Heart right ventricle (tissue), 16 donors: ENCODE measurements at regions of chrX and their contacts with region 1.

Region 1: GRCh38 chrX:130079824-130080406 is 30.4 kb downstream of the ELF4 start:
- DNase-seq: peak; percentile 18 to 58
- ATAC-seq: peak in 7 of 8 donors; percentile 21 to 65 (median 58)
- H3K4me3 ChIP-seq: no peak overlapping the region
- H3K27ac ChIP-seq: no peak overlapping the region
- H3K4me1 ChIP-seq: peaks cover 0 to 37% (median 21%) of the 10 kb centered on the region in 9 donors
- H3K27me3 ChIP-seq: peaks cover 0 to 6% (median 0%) of the 10 kb centered on the region in 7 donors
- CTCF ChIP-seq: peak; percentile 55 to 76 (median 72)

Region 2: DNA sequence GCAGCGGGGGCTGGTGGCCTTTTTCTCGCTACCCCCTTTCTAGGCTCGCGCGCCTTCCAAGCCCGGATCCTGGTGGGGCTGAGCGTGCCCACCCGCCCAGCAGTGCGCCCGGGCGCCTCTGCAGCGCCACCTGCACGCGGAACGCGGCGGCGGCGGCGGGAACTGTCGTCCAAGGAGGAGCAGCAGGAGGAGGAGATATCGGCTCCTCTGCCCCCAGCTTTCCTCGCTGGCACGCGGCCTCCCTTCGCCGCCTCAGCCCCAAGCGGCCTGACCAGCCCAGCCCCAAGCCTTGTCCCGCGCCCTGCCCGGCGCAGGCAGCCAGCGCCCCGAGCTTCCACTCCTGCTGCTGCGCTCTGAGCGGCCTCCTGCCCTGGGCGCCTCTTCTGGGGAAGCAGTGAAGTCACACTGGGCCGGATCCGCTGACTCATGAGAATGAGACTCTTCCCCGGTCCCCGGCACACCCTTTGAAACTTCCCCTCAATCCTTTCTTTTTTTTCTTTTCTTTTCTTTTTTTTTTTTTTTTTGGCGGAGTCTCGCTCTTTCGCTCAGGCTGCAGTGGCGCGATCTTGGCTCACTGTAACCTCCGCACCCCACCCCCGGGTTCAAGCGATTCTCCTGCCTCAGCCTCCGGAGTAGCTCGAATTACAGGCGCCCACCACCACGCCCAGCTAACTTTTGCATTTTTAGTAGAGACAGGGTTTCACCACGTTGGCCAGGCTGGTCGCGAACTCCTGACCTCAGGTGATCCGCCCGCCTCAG is 41.0 kb after region 1 on chrX:
- intact Hi-C with region 1: loop called in 8 of 10 experiments (anchors 2 to 5 kb)
- DNase-seq: peak; percentile 76 to 80
- ATAC-seq: peak; percentile 73 to 89 (median 76)
- H3K4me3 ChIP-seq: peak overlapping the region in 9 of 10 donors; percentile 11 to 56 (median 50)
- H3K27ac ChIP-seq: peak overlapping the region in 9 of 10 donors; percentile 62 to 90 (median 77)
- H3K4me1 ChIP-seq: peaks cover 0 to 33% (median 19%) of the 10 kb centered on the region in 9 donors
- H3K27me3 ChIP-seq: peaks cover 0 to 5% (median 0%) of the 10 kb centered on the region in 7 donors
- CTCF ChIP-seq: peak; percentile 56 to 79 (median 67)

Region 3: DNA sequence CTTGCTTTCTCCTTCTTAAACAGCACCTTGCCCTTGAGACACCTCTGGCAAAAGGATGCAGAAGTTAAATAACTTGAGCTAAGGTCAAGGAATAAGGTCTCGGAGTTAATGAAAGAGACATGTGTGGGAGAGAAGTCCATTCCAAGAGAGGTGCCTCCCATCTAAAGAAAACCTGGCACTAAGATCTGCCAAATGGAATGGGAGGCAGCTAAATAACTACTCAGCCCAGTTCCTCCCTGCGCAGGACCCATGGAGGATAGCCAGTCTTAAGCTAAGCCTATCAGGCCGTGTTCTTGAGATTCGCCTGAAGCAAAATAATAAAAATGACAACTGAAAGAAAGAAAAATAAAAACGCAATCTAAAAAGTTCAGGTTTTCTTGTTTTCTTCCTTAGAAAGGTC is 51.1 kb after region 1 on chrX:
- intact Hi-C with region 1: no loop called
- DNase-seq: no peak
- ATAC-seq: no peak
- H3K4me3 ChIP-seq: no peak overlapping the region
- H3K27ac ChIP-seq: no peak overlapping the region
- H3K4me1 ChIP-seq: peaks cover 0 to 8% (median 3%) of the 10 kb centered on the region in 9 donors
- H3K27me3 ChIP-seq: no peaks in the 10 kb centered on the region
- CTCF ChIP-seq: no peak

Region 4: GRCh38 chrX:130165703-130166502 is 86.0 kb after region 1 on chrX and contains the start of gene AIFM1:
- intact Hi-C with region 1: loop called in 1 of 10 experiments (anchors 5 kb)
- DNase-seq: peak; percentile 91 to 92
- ATAC-seq: peak; percentile 97 to 99 (median 98)
- H3K4me3 ChIP-seq: peak within 1 kb of the TSS; percentile 44 to 80 (median 71)
- H3K27ac ChIP-seq: peak within 1 kb of the TSS; percentile 69 to 94 (median 90)
- H3K4me1 ChIP-seq: peaks cover 0 to 38% (median 8%) of the 10 kb centered on the region in 9 donors
- H3K27me3 ChIP-seq: no peaks in the 10 kb centered on the region
- CTCF ChIP-seq: no peak
- total RNA-seq, gene AIFM1: 93.8 to 165 (median 142) TPM

Region 5: DNA sequence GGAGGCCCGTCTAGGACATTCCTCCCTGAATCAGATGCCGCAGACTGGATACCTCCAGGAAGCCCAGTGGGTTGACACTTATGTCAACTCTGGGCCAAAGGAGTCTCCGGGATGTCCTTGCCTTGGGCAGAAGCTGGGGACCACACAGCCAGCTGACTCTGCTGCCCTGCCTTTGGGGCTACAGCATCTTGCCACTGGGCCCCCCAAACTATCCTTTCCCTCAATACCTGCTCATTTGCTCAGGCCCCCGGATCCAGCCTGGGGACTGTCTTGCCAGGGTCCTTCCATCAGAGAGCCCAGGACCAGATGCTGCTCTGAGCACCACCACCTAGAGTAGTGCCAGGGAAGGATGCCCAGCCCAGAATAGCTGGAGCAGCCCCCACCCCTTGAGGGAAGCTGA is 110.9 kb after region 1 on chrX:
- intact Hi-C with region 1: loop called (anchors 1 to 5 kb)
- DNase-seq: no peak
- ATAC-seq: no peak
- H3K4me3 ChIP-seq: no peak overlapping the region
- H3K27ac ChIP-seq: no peak overlapping the region
- H3K4me1 ChIP-seq: no peaks in the 10 kb centered on the region
- H3K27me3 ChIP-seq: no peaks in the 10 kb centered on the region
- CTCF ChIP-seq: no peak

Region 6: DNA sequence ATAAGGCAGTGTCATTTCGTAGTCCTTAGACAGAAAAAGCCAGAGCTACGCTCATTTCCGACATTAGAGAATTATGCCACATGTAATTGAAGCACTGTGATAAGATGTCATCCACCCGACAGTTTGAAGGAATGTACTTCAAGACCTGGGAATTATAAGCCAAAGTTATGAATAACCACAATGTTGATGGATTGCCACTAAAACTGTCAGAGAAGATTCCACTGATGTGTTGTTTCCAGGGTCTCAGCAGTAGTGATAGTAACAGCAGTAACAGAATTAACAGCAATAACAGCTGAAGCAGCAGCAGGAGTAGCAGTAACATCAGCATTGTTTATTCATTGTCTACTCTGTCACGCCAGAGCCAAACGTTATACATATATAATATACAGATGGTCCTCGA is 116.6 kb after region 1 on chrX:
- intact Hi-C with region 1: loop called (anchors 1 to 5 kb)
- DNase-seq: no peak
- ATAC-seq: no peak
- H3K4me3 ChIP-seq: no peak overlapping the region
- H3K27ac ChIP-seq: no peak overlapping the region
- H3K4me1 ChIP-seq: no peaks in the 10 kb centered on the region
- H3K27me3 ChIP-seq: no peaks in the 10 kb centered on the region
- CTCF ChIP-seq: no peak